H1 (cell line): ENCODE measurements at regions of chr19 and their contacts with region 1.

Region 1: GRCh38 chr19:49301165-49301865 is 23.7 kb downstream of the SLC6A16 start:
- DNase-seq: peak; percentile 50 to 95
- H3K4me3 ChIP-seq: no peak overlapping the region
- H3K27ac ChIP-seq: no peak overlapping the region
- H3K4me1 ChIP-seq: no peaks in the 10 kb centered on the region; a peak in 2 of 7 replicates
- H3K27me3 ChIP-seq: no peaks in the 10 kb centered on the region
- CTCF ChIP-seq: peak; percentile 85 to 98 (median 97)
- EP300 ChIP-seq: no peak
- POLR2A ChIP-seq: no peak
- RAD21 ChIP-seq: peak; percentile 62 to 73

Region 2: DNA sequence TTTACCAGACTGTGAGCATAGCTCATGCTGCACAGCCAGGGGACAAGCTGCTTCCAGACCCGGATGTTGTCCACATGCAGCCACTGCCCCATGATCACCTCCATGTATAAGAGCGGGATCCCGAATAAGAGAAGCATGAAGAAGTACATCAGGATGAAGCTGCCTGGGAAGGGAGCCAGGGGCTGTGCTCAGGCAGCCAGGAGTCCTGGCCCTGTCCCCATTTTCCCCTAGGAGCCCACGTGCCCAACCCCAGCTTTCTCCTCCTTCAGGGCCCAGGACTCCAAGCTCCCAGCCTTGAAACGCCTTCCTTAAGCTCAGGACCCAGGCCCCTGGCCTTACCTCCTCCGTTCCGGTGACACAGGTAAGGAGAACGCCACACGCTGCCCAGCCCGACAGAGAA is 45.6 kb before region 1 on chr19:
- CTCF ChIA-PET with region 1: interaction called, 10 read pairs
- POLR2A ChIA-PET with region 1: no interaction called
- DNase-seq: no peak
- H3K4me3 ChIP-seq: no peak overlapping the region
- H3K27ac ChIP-seq: no peak overlapping the region
- H3K4me1 ChIP-seq: no peaks in the 10 kb centered on the region
- H3K27me3 ChIP-seq: no peaks in the 10 kb centered on the region
- CTCF ChIP-seq: no peak
- EP300 ChIP-seq: no peak
- POLR2A ChIP-seq: no peak
- RAD21 ChIP-seq: no peak

Region 3: GRCh38 chr19:49272184-49272583 is 29.1 kb before region 1 on chr19:
- CTCF ChIA-PET with region 1: interaction called, 15 read pairs
- POLR2A ChIA-PET with region 1: no interaction called
- DNase-seq: no peak
- H3K4me3 ChIP-seq: no peak overlapping the region
- H3K27ac ChIP-seq: no peak overlapping the region
- H3K4me1 ChIP-seq: no peaks in the 10 kb centered on the region
- H3K27me3 ChIP-seq: no peaks in the 10 kb centered on the region
- CTCF ChIP-seq: no peak
- EP300 ChIP-seq: no peak
- POLR2A ChIP-seq: no peak
- RAD21 ChIP-seq: no peak

Region 4: GRCh38 chr19:49282184-49282583 is 19.1 kb before region 1 on chr19:
- CTCF ChIA-PET with region 1: interaction called, 27 read pairs
- POLR2A ChIA-PET with region 1: interaction called, 3 read pairs
- DNase-seq: no peak
- H3K4me3 ChIP-seq: no peak overlapping the region
- H3K27ac ChIP-seq: no peak overlapping the region
- H3K4me1 ChIP-seq: no peaks in the 10 kb centered on the region
- H3K27me3 ChIP-seq: no peaks in the 10 kb centered on the region
- CTCF ChIP-seq: no peak
- EP300 ChIP-seq: no peak
- POLR2A ChIP-seq: no peak
- RAD21 ChIP-seq: no peak

Region 5: DNA sequence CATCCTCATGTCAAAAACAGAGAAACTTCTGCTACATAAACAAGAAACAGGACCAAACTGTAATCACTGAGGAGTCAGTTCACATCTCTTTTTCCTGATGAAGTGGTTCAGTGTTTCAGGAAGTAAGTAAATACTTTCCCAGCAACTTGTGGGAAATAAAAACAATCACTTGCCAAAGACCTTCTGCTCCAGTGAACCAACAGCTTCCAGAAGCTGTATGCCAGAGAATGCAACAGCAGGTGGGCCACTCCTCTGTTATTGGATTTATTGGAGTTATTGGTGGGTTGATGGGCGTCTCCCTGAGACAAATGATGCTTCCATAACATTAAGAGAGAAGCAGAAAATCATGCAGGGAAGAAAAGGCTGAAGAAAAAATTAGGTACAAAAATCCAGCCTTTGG is 13.8 kb after region 1 on chr19:
- CTCF ChIA-PET with region 1: interaction called, 28 read pairs
- POLR2A ChIA-PET with region 1: interaction called, 7 read pairs
- DNase-seq: no peak
- H3K4me3 ChIP-seq: no peak overlapping the region
- H3K27ac ChIP-seq: no peak overlapping the region
- H3K4me1 ChIP-seq: no peaks in the 10 kb centered on the region
- H3K27me3 ChIP-seq: no peaks in the 10 kb centered on the region
- CTCF ChIP-seq: no peak
- EP300 ChIP-seq: no peak
- POLR2A ChIP-seq: no peak
- RAD21 ChIP-seq: no peak

Region 6: GRCh38 chr19:49327878-49328544 is 26.7 kb after region 1 on chr19:
- CTCF ChIA-PET with region 1: interaction called, 15 read pairs
- POLR2A ChIA-PET with region 1: interaction called, 3 read pairs
- DNase-seq: no peak
- H3K4me3 ChIP-seq: no peak overlapping the region
- H3K27ac ChIP-seq: no peak overlapping the region
- H3K4me1 ChIP-seq: no peaks in the 10 kb centered on the region
- H3K27me3 ChIP-seq: no peaks in the 10 kb centered on the region; a peak in 1 of 7 replicates
- CTCF ChIP-seq: peak in 2 of 3 experiments; percentile 63 to 69; a peak in 3 of 4 replicates
- EP300 ChIP-seq: no peak
- POLR2A ChIP-seq: no peak
- RAD21 ChIP-seq: peak; percentile 41 to 54